H1 (cell line): ENCODE measurements at regions of chr11 and their contacts with region 1.

Region 1: DNA sequence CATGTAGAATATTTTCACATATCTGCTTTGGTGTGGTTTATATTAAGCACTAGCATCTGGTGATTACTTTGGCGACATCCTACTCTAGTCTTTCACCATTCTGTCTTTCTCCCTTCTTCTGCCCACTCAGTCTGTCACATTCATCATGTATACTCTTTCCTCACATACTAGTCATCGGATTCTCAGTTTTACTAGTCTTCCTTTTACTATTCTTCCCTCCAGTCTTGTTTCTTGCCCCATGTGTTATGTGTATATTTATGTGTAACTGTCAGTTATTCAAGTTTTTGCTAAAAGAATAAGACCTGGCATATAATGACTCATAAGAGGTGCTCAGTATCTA is 4.6 kb upstream of the DIXDC1 start:
- DNase-seq: no peak
- H3K4me3 ChIP-seq: no peak overlapping the region
- H3K27ac ChIP-seq: no peak overlapping the region
- H3K4me1 ChIP-seq: peaks cover 0 to 9% (median 5%) of the 10 kb centered on the region in 4 experiments; a peak in 6 of 7 replicates
- H3K27me3 ChIP-seq: no peaks in the 10 kb centered on the region
- CTCF ChIP-seq: no peak
- EP300 ChIP-seq: no peak
- POLR2A ChIP-seq: no peak
- RAD21 ChIP-seq: no peak

Region 2: DNA sequence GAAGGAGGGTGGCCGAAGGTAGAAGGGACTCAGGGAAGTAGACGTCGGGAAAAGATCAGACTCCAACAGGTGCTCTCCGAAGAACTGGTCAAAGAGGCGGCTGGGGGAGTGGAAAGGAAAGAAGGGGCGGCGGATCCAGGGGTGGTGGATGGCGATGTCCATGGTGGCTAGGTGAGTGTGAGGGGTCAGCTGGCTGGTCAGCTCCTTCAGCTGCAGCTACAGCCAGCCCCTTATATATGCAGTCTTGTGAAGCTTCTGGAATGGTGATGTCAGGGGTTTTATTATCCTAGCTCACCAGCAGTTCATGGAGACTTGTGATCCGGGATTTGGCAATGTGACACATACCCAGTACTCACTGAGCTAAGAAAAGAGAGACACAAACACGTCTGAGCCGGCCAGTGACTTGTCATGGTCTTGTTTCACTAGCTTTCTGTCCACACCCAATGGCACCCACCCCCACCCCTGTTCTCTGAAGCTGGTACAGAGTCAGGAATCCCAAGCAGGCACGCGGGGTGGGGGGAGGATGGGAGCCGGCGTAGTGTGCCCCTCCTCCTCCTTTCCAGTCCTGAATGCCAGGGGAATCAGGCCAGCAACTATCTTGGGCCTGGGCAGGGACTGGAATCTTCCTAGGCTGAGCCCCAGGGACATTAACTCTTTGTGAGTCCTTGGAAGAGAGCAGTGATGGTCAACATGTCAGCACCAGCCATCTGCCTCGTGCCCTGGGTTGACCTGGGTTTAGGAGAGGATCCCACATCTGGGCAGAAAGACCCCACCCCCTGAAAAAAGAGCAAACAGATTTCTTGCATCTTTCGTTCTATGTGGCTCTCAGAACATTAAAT is 20.8 kb before region 1 on chr11 and contains the start of gene CRYAB:
- CTCF ChIA-PET with region 1: interaction called, 13 read pairs
- POLR2A ChIA-PET with region 1: interaction called, 8 read pairs
- DNase-seq: no peak
- H3K4me3 ChIP-seq: no peak within 1 kb of the TSS; a peak in 1 of 8 replicates
- H3K27ac ChIP-seq: no peak within 1 kb of the TSS
- H3K4me1 ChIP-seq: peaks cover 0 to 15% (median 9%) of the 10 kb centered on the region in 4 experiments
- H3K27me3 ChIP-seq: no peaks in the 10 kb centered on the region
- CTCF ChIP-seq: no peak
- EP300 ChIP-seq: no peak
- POLR2A ChIP-seq: no peak
- RAD21 ChIP-seq: no peak
- total RNA-seq, gene CRYAB: 2.0 and 4.0 TPM in 2 replicates

Region 3: DNA sequence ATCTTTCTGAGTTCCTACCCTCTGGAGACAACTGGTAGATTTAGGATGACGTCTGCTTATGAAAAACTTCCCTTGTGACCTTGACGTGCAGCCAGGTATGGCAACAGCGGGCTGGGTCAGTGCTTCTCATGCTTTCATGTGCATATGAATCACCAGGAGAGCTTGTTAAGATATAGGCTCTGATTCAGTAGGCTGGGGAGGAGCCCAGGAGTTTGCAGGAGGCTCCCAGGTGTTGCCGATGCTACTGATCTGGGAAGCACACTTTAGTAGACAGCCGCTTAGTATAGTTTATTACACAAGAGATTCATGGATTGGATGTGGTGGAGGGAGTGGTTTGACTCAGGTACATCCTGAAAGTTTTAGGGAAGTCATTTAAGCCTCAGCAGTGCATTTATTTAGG is 28.3 kb after region 1 on chr11:
- CTCF ChIA-PET with region 1: interaction called, 12 read pairs
- POLR2A ChIA-PET with region 1: interaction called, 5 read pairs
- DNase-seq: no peak
- H3K4me3 ChIP-seq: peak overlapping the region in 1 of 4 experiments; percentile 13; a peak in 1 of 8 replicates
- H3K27ac ChIP-seq: no peak overlapping the region
- H3K4me1 ChIP-seq: peaks cover 0 to 10% (median 3%) of the 10 kb centered on the region in 4 experiments; a peak in 3 of 7 replicates
- H3K27me3 ChIP-seq: no peaks in the 10 kb centered on the region
- CTCF ChIP-seq: no peak
- EP300 ChIP-seq: no peak
- POLR2A ChIP-seq: peak in 1 of 2 experiments; percentile 21; a peak in 1 of 3 replicates
- RAD21 ChIP-seq: no peak

Region 4: DNA sequence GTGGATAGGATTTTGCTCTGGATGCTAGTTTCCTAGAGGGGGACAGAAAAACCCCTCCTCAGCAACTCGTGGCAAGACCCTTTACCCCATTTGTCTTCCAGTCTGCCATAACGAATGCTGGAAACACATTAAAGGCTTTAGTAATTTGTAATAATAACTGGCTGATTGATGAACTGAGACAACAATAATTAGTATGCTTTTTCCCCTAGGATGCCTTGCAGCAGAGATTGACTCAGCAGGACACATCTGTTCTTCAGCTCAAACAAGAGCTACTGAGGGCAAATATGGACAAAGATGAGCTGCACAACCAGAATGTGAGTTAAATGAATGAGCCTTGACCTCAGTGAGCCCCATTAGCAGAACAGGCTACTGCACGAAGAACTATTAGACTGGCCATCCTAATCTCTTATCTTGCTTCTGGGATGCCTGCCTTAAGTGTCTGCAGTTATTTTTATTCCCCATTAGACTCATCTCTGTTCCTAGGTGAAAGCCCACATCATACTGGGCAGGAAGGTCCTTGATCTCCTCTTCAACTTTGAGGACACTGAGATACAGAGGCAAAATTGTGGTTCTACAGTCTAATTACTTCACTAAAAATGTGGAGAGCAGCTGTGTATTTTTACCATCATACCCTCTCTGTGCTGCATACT is 59.8 kb after region 1 on chr11:
- CTCF ChIA-PET with region 1: interaction called, 565 read pairs
- POLR2A ChIA-PET with region 1: no interaction called
- DNase-seq: no peak
- H3K4me3 ChIP-seq: no peak overlapping the region
- H3K27ac ChIP-seq: no peak overlapping the region
- H3K4me1 ChIP-seq: no peaks in the 10 kb centered on the region
- H3K27me3 ChIP-seq: no peaks in the 10 kb centered on the region
- CTCF ChIP-seq: no peak
- EP300 ChIP-seq: no peak
- POLR2A ChIP-seq: no peak
- RAD21 ChIP-seq: no peak